ENCODE measurements at regions of chr17 and their contacts with region 1.

Region 1: GRCh38 chr17:49694847-49695683 is 12.7 kb downstream of the SLC35B1 start:
- DNase-seq: peak; percentile 73
- ATAC-seq: peak; percentile 75
- H3K4me3 ChIP-seq: no peak overlapping the region
- H3K27ac ChIP-seq: no peak overlapping the region
- H3K4me1 ChIP-seq: no peaks in the 10 kb centered on the region
- H3K27me3 ChIP-seq: no peaks in the 10 kb centered on the region
- CTCF ChIP-seq: peak; percentile 89

Region 2: GRCh38 chr17:49575579-49576087 is 119.4 kb before region 1 on chr17 and contains the start of gene NXPH3:
- intact Hi-C with region 1: loop called (anchors 5 kb)
- DNase-seq: peak; percentile 87
- ATAC-seq: peak; percentile 87
- H3K4me3 ChIP-seq: peak within 1 kb of the TSS; percentile 66
- H3K27ac ChIP-seq: peak within 1 kb of the TSS; percentile 43
- H3K4me1 ChIP-seq: peaks cover 28% of the 10 kb centered on the region
- H3K27me3 ChIP-seq: peaks cover 7% of the 10 kb centered on the region
- CTCF ChIP-seq: peak; percentile 30
- total RNA-seq, gene NXPH3: 6.3 TPM

Region 3: DNA sequence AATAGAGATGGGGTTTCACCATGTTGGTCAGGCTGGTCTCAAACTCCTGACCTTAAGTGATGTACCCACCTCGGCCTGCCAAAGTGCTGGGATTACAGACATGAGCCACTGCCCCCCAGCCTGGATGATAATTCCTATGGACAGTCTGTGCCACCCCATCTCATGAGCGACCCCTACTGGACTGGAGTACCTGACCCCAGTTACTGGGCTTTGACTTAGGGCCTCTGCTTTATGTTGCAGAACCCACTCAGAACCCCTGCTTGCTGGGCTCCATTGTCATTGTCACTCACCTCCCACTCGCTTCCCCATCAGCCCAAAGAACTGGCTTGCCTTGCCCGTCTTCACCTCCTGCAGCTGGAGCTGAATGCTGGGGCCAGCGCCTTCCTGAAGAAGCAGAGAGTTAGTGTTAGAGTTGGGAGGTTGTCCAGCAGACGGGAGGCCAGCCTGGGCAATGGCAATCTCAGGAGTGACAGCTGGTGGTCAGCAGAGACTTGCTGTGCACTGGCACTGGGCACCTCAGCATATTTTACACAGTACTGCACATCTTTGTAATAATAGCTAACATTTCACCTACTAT is 148.8 kb after region 1 on chr17:
- intact Hi-C with region 1: loop called (anchors 10 kb)
- DNase-seq: peak; percentile 59
- ATAC-seq: peak; percentile 31
- H3K4me3 ChIP-seq: no peak overlapping the region
- H3K27ac ChIP-seq: no peak overlapping the region
- H3K4me1 ChIP-seq: peaks cover 14% of the 10 kb centered on the region
- H3K27me3 ChIP-seq: no peaks in the 10 kb centered on the region
- CTCF ChIP-seq: peak; percentile 29